ENCODE measurements at regions of chr20 and their contacts with region 1.

Region 1: DNA sequence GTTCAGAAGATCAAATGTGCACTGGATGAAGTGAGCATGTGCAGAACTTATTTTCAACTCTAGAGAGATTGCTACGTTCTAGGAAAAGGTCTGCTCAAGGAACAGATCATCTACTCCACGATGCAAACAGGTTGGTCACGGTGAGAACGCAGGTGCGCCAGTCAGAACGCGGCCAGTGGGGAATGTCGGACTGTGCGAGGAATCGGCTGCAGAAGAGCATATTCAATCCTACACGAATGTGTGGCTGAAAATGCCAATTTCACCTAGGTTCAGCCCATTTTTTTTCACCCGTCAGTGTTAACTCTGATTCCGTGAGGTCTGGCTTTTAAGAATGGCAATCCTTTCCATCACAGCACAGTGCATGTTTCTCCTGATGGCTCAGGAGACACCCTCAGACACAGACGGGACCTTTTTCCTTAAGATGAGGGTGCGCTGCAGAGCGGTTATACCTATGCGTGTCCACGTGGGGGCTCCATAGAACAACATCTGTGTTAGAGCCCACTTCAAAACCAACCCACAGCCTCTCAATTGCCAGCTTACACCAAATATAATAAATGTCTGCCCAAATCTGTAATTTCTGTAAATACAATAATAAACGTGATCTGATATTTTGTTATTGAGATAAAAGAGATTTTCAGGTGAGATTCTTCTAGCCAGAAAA is 250.4 kb downstream of the FOXA2 start:
- DNase-seq: peak in 5 of 9 donors; percentile 3 to 27 (median 23)
- ATAC-seq: peak; percentile 78
- H3K4me3 ChIP-seq: no peak overlapping the region
- H3K4me3 Mint-ChIP-seq: no peak overlapping the region
- H3K27ac ChIP-seq: no peak overlapping the region
- H3K27ac Mint-ChIP-seq: no peak overlapping the region
- H3K4me1 ChIP-seq: no peaks in the 10 kb centered on the region
- H3K4me1 Mint-ChIP-seq: peaks cover 0 to 1% (median under 1%) of the 10 kb centered on the region in 7 donors
- H3K27me3 ChIP-seq: no peaks in the 10 kb centered on the region
- H3K27me3 Mint-ChIP-seq: peaks cover under 1 to 37% (median 13%) of the 10 kb centered on the region in 5 donors

Region 2: DNA sequence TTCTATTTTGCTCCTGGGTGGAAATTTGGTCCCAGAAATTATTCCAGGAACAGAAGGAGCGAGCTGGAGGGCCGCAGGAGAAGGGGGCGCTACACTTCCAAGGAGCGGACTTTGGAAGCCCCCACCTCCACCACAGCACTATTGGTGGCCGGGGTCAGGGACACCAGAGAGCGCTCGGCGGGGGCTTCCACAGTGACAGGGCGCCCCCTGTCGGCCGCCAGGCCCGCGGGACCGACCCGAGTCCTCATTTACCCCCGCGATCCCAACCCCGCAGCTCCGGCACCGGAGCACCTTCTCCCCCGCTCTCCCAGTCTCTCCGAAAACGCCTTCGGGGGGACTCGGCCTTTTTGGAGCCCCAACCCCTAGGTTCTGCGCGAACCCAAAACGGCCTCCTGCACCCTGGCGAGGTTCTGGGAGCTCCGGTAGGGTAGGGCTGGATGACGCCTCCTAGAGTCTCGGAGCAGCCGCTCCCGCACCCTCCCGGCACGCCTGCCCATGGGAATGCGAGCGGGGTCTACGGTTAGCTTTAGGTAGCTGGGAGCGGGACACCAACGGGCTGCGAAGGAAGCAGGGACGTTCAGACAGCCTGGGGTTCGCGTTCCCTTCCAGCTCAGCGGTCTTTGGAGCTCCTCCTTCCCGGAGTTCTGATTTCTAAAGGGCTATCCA is 252.8 kb after region 1 on chr20:
- CTCF ChIA-PET with region 1: no interaction called
- POLR2A ChIA-PET with region 1: no interaction called
- intact Hi-C with region 1: loop called in 1 of 2 experiments (anchors 1 kb)
- DNase-seq: no peak
- ATAC-seq: no peak
- H3K4me3 ChIP-seq: no peak overlapping the region
- H3K4me3 Mint-ChIP-seq: no peak overlapping the region
- H3K27ac ChIP-seq: no peak overlapping the region
- H3K27ac Mint-ChIP-seq: no peak overlapping the region
- H3K4me1 ChIP-seq: no peaks in the 10 kb centered on the region
- H3K4me1 Mint-ChIP-seq: peaks cover 0 to 4% (median 0%) of the 10 kb centered on the region in 7 donors
- H3K27me3 ChIP-seq: no peaks in the 10 kb centered on the region
- H3K27me3 Mint-ChIP-seq: peaks cover 41 to 70% (median 50%) of the 10 kb centered on the region in 5 donors

Region 3: GRCh38 chr20:23235173-23236027 is 901.4 kb after region 1 on chr20:
- CTCF ChIA-PET with region 1: no interaction called
- POLR2A ChIA-PET with region 1: no interaction called
- intact Hi-C with region 1: loop called in 1 of 2 experiments (anchors 10 kb)
- DNase-seq: peak in 2 of 9 donors; percentile 18 to 51
- ATAC-seq: peak; percentile 67
- H3K4me3 ChIP-seq: no peak overlapping the region
- H3K4me3 Mint-ChIP-seq: no peak overlapping the region
- H3K27ac ChIP-seq: no peak overlapping the region
- H3K27ac Mint-ChIP-seq: no peak overlapping the region
- H3K4me1 ChIP-seq: no peaks in the 10 kb centered on the region
- H3K4me1 Mint-ChIP-seq: peaks cover 0 to 4% (median 0%) of the 10 kb centered on the region in 7 donors
- H3K27me3 ChIP-seq: no peaks in the 10 kb centered on the region
- H3K27me3 Mint-ChIP-seq: peaks cover 8 to 26% (median 9%) of the 10 kb centered on the region in 5 donors

Region 4: GRCh38 chr20:23441850-23442313 is 1107.9 kb after region 1 on chr20:
- CTCF ChIA-PET with region 1: no interaction called
- POLR2A ChIA-PET with region 1: no interaction called
- intact Hi-C with region 1: loop called in 1 of 2 experiments (anchors 10 kb)
- DNase-seq: peak in 8 of 9 donors; percentile 15 to 49 (median 29)
- ATAC-seq: peak; percentile 81
- H3K4me3 ChIP-seq: no peak overlapping the region
- H3K4me3 Mint-ChIP-seq: no peak overlapping the region
- H3K27ac ChIP-seq: no peak overlapping the region
- H3K27ac Mint-ChIP-seq: no peak overlapping the region
- H3K4me1 ChIP-seq: no peaks in the 10 kb centered on the region
- H3K4me1 Mint-ChIP-seq: peaks cover 0 to 4% (median 0%) of the 10 kb centered on the region in 7 donors
- H3K27me3 ChIP-seq: no peaks in the 10 kb centered on the region
- H3K27me3 Mint-ChIP-seq: peaks cover 0 to 2% (median 0%) of the 10 kb centered on the region in 5 donors

Measured in naive thymus-derived CD4-positive, alpha-beta T cell (primary cell).